ENCODE measurements at regions of chr17 and their contacts with region 1.

Region 1: GRCh38 chr17:78197147-78197832 is 10.1 kb downstream of the AFMID start:
- DNase-seq: no peak
- H3K4me3 ChIP-seq: no peak overlapping the region
- CTCF ChIP-seq: no peak

Region 2: DNA sequence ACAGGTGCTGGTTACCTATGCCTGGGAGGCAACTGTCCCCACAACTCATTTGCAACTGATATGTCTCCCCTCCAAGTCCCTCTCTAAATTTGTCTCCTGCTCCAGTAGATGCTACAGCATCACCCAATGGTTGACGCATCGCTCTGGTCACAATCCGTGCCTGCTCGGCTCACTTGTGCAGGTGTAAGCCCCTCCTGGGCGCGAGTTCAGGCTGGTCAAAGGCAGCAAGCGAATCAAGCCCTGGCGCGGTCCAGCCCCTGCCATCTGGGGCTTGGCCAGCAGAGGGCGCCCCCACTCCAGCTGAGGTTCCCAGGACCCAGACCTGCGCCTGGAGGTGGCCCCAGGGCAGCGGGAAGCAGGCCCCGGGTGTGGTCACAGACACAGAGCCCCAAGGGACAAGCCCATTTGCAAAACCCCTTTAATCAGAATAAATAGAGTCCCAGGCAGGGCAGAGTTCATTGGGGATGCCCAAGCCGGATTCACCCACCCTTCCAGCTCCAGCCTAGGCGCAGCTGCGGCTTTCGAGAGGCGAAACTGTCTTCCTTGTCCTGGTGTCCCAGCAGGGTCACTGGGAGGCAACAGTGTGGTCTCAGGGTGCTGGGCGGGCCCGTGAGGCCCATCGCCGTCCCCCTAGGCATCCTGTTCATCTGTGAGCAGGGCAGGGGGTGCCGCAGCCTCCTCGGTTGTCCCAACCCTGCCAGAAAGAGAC is 84.6 kb before region 1 on chr17:
- in situ Hi-C with region 1: loop called (anchors 5 kb)
- DNase-seq: no peak
- H3K4me3 ChIP-seq: no peak overlapping the region
- CTCF ChIP-seq: peak; percentile 96

Region 3: GRCh38 chr17:78237401-78238012 is 40.2 kb after region 1 on chr17:
- in situ Hi-C with region 1: no loop called
- DNase-seq: no peak
- H3K4me3 ChIP-seq: no peak overlapping the region
- CTCF ChIP-seq: no peak

Region 4: DNA sequence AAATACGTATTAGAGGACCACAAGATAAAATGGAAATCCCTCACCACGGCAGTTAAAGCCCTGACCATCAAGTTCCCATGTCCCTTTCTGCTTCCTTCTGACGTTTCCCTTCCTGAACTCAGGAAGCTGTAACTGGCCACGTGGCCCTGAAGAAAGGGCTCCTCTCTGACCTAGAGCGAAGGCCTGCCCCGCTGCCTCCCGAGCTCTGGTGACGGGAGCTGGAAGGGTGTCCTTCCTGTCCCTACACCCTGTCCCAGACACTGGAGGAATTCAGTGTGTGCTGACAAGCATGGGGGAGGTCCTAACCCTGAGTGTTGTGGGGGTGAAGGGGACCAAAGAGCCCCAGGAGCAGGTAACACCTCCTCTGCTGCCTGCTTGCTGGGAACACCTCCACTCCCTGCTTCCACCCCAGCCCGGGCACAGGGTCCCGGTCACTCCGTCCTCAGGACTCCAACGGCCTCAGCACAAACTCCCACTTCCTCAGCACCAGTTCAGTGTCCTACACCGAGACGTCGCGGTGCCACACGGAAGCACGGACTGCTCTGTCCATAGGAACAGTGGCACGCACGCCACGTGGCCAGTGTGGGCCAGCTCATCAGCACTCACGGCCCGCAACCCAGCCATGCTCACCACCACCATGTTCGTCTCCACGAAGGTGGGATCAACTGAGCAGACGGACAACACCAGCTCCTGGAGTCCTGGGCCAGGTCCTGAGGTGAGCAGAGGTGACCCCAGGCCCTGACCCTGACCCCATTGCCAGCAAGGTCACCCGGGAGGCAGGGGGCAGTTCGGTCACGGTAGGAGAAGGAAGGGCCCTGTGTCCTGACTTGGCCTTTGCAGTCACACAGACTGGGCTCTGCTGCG is 51.0 kb after region 1 on chr17:
- in situ Hi-C with region 1: no loop called
- DNase-seq: no peak
- H3K4me3 ChIP-seq: no peak overlapping the region
- CTCF ChIP-seq: no peak

Region 5: GRCh38 chr17:78258323-78259191 is 61.3 kb after region 1 on chr17:
- in situ Hi-C with region 1: loop called (anchors 5 kb)
- DNase-seq: no peak
- H3K4me3 ChIP-seq: no peak overlapping the region
- CTCF ChIP-seq: no peak

Region 6: DNA sequence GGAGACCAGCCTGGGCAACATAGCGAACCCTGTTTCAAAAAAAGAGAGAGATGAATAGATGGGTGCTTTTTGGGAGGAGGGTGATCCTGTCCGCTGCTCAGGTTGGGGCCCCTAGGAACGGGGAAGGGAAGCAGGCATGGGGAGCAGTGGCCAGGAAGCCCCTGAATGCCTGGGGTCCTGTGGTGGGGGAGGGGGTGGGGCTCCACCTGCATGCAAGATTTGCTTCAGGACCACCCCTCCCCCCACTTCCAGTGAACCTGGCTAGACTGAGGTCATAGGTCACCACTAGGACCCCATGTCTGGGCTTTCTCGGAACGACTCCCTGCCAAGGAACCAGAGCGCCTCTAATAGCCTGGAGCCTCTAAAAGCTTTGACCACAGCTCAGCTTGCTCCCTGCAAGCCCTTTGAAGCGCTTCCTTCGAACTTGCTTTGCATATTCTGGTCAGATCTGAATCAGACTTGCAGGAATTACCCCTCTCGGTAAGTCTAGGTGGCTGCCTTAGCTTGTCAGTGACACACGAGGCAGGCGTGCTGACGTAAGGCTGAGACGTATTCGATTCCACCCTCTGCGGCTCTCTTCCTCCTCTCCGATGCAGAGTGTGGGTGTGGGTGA is 158.9 kb after region 1 on chr17:
- in situ Hi-C with region 1: no loop called
- DNase-seq: no peak
- H3K4me3 ChIP-seq: peak overlapping the region; percentile 84
- CTCF ChIP-seq: no peak

Measured in astrocyte of the cerebellum (primary cell).